ENCODE measurements at regions of chr12 and their contacts with region 1.

Region 1: DNA sequence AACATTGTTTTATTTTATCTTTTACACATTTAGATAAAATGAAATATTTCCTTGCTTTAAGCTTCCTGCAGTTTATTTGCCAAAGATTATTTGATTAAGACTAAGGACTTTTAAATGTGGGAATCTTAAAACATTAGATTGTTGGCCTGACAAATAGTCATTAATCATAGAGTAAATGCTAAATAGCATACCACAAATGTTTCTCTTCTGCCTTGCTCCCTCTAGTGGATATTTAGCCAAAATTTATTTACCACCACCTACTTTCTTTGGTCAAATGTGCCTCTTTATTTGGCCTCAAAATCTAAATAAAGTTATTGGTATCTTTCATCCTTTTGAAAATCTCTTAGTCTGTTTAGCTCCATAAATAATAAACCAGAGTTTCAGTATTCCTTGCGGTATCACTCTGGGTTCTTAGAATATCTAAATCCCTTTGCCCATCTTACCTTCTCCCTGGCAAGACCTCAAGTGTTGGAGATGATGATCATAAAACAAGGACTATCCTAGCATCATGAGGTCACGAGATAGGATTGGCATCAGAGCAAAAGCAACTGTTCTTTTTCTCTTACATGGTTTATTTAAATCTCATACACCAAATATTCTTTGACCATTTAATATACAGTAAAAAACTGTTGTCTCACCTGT is 150.6 kb upstream of the AEBP2 start:
- H3K4me3 Mint-ChIP-seq: no peak overlapping the region
- H3K27ac Mint-ChIP-seq: no peak overlapping the region
- H3K4me1 Mint-ChIP-seq: peaks cover 5% of the 10 kb centered on the region
- H3K27me3 Mint-ChIP-seq: no peaks in the 10 kb centered on the region

Region 2: DNA sequence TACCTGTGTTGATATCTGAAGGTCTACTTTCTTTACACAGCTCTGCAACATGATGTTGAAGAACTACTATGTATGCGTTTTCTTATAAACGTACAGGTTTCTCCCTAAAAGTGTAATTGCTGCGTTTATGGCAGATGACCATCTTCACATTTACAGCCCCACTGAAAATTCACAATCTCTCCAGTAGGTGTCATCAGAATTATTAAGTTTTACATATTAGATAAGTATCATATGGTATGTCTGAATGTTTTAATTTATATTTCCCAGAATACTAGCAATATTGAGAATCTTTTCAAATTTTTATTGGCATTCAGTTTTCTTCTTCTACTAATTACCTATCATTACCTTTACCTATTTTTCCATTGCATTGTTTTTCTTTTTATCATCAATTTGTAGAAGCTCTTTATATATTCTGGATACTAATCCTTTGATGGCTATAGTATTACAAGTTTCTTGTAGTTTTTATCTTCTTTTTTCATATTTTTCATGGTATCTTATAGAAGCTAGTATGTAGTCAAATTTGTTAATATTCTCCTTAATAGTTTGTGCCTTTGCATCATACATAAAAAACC is 427.4 kb before region 1 on chr12:
- intact Hi-C with region 1: loop called (anchors 5 kb)
- H3K4me3 Mint-ChIP-seq: no peak overlapping the region
- H3K27ac Mint-ChIP-seq: no peak overlapping the region
- H3K4me1 Mint-ChIP-seq: no peaks in the 10 kb centered on the region
- H3K27me3 Mint-ChIP-seq: no peaks in the 10 kb centered on the region

Region 3: DNA sequence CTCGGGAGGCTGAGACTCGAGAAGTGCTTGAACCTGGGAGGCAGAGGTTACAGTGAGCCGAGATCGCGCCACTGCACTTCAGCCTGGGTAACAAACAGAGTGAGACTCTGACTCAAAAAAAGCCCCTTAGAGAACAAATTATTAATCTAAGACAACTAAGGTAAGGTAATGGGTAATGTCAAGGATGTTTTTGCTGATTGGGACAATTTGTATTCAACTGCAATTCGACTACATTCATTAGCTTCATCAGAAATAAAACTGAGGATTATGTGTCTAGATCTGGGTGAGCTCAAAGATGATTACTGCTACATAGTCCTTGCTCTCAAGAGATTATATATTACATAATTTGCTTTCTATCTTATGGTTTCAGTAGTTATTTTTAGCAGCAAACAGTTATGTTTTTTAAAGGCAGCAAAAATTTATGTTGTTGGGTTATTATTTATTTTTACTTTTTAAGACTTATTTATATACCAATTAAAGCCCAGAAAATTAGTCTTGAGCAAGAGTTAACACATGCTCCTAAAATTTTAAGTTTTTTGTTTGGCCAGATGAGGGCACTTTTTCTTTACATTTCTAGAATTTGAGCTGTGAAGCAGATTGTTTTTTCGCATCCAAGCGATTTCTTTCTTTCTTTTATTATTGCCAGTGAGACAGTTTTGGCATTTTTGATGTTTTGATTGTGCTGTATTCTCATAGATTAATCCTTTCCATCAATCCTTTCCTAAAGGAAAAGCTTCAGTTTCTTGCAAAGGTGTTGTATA is 106.9 kb before region 1 on chr12:
- intact Hi-C with region 1: loop called (anchors 1 kb)
- H3K4me3 Mint-ChIP-seq: no peak overlapping the region
- H3K27ac Mint-ChIP-seq: no peak overlapping the region
- H3K4me1 Mint-ChIP-seq: peaks cover 13% of the 10 kb centered on the region
- H3K27me3 Mint-ChIP-seq: peaks cover 1% of the 10 kb centered on the region

Region 4: GRCh38 chr12:19236656-19237055 is 52.1 kb before region 1 on chr12:
- intact Hi-C with region 1: loop called (anchors 5 kb)
- H3K4me3 Mint-ChIP-seq: peak overlapping the region; percentile 6
- H3K27ac Mint-ChIP-seq: no peak overlapping the region
- H3K4me1 Mint-ChIP-seq: peaks cover 60% of the 10 kb centered on the region
- H3K27me3 Mint-ChIP-seq: no peaks in the 10 kb centered on the region

Measured in dendritic cell treated with granulocyte-macrophage colony-stimulating factor and Interleukin-4, amounts not matched to agents 40 ng/mL and 50 ng/mL, for 4 days (primary cell).